Activated naive CD4-positive, alpha-beta T cell treated with anti-CD3 and anti-CD28 coated beads for 36 hours (primary cell): ENCODE measurements at regions of chr7 and their contacts with region 1.

Region 1: DNA sequence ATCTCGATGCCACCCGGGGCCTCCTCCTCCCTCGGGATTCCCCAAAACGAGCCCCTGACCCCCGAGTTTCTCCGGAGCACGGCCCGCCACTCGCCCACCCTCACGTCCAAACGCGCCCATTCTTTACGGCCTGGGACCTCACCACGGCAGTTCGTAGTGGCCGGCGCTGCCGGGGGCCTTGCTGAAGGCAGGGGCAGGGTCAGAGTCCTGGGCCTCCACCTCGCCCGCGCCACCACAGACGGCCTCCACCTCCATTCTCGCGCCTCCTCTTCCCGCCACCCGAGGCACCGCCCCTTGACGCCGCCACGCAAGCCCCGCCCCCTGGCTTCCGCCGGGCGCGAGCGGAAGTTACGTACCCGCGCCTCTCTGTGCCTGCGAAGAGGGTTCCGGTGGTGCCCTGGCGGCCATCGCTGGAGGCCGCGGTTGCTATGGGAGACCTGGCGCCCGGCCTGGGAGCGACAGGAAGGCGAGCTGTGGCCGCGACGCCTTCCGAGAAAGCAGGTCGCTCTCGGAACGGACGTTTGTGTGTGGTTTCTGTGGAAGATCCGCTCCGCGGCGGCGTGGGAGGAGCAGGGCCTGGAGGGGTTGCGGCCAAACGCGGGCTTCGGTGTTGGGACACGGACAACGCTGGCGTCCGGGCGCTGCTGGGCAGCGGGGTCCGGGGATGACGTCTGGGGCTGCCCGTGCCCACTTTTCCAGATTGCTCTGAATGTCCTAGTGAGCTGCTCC is at the start of gene RFC2:
- DNase-seq: peak; percentile 97
- H3K4me3 Mint-ChIP-seq: peak within 1 kb of the TSS; percentile 95
- H3K27ac Mint-ChIP-seq: peak within 1 kb of the TSS; percentile 95
- H3K4me1 Mint-ChIP-seq: peaks cover 20% of the 10 kb centered on the region
- H3K27me3 Mint-ChIP-seq: no peaks in the 10 kb centered on the region
- total RNA-seq, gene RFC2: 91.5 to 96.0 TPM

Region 2: GRCh38 chr7:73522105-73522872 is 732.0 kb before region 1 on chr7 and contains the start of gene BAZ1B:
- CTCF ChIA-PET with region 1: no interaction called
- intact Hi-C with region 1: loop called (anchors 5 kb)
- DNase-seq: peak; percentile 99
- H3K4me3 Mint-ChIP-seq: peak within 1 kb of the TSS; percentile 98
- H3K27ac Mint-ChIP-seq: peak within 1 kb of the TSS; percentile 96
- H3K4me1 Mint-ChIP-seq: peaks cover 55% of the 10 kb centered on the region
- H3K27me3 Mint-ChIP-seq: no peaks in the 10 kb centered on the region
- total RNA-seq, gene BAZ1B: 67.6 to 69.9 TPM

Region 3: DNA sequence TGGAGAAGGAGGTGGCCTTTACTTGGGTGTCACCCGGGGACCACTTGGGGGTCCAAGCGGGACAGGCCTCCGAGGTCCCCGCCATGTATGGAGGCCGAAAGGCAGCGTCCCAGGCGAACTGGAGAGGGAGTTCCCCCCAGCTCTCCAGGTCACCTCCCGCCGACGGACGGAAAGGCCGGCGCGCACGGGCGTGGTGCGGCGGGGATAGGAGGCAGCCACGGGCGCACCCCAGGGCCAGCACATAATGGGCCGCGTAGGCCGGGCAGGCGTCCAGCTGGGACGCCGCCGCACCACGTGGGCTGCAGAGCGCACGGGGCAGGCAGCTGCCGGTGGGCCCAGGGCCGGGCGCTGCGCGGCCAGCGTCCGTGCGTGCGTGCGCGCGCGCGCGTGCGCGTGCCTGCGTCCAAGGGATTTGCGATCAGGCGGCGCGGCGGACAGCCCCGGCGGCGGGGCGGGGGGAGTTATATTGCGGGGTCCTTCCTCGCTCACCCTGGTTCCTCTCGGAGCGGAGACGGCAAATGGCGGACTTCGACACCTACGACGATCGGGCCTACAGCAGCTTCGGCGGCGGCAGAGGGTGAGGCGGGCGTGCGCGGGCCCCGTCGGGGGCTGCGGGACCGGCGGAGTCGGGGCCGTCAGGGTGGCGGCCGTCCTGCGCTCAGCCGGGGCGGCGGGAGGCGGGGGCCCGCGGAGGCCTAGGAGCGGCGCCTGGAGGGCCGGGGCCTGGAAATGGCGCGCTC is 80.3 kb before region 1 on chr7 and contains the start of gene EIF4H:
- CTCF ChIA-PET with region 1: no interaction called
- intact Hi-C with region 1: loop called (anchors 1 kb)
- DNase-seq: peak; percentile 95
- H3K4me3 Mint-ChIP-seq: peak within 1 kb of the TSS; percentile 87
- H3K27ac Mint-ChIP-seq: peak within 1 kb of the TSS; percentile 88
- H3K4me1 Mint-ChIP-seq: peaks cover 39% of the 10 kb centered on the region
- H3K27me3 Mint-ChIP-seq: no peaks in the 10 kb centered on the region
- total RNA-seq, gene EIF4H: 492 to 518 TPM

Region 4: DNA sequence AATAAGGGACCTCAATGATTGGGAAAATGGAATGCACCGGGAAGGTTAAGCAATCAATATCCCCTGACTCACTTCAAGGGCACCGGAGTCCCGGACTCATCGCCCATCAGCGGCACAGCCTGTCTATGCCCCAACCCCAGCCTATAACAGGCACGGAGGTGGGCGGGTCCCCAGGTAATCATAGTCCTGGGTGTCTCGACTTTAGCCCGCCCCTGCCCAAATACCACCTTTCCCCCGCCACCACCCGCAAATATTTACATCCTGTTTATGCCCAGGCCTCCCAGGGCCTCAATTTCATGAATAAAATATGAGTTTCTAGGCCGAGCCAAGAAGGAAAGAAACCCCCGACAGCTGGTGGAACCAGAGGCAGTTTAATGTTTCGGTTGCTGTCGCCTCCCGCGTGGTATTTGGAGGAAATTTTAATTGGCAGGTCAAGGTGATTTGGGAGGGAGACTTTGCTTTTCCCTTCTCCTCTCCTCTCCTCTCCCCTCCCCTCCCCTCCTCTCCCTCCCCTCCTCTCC is 15.5 kb after region 1 on chr7:
- CTCF ChIA-PET with region 1: interaction called, 3 read pairs
- intact Hi-C with region 1: loop called (anchors 1 kb)
- DNase-seq: peak; percentile 74
- H3K4me3 Mint-ChIP-seq: peak overlapping the region; percentile 73
- H3K27ac Mint-ChIP-seq: no peak overlapping the region
- H3K4me1 Mint-ChIP-seq: peaks cover 11% of the 10 kb centered on the region
- H3K27me3 Mint-ChIP-seq: peaks cover 5% of the 10 kb centered on the region

Region 5: DNA sequence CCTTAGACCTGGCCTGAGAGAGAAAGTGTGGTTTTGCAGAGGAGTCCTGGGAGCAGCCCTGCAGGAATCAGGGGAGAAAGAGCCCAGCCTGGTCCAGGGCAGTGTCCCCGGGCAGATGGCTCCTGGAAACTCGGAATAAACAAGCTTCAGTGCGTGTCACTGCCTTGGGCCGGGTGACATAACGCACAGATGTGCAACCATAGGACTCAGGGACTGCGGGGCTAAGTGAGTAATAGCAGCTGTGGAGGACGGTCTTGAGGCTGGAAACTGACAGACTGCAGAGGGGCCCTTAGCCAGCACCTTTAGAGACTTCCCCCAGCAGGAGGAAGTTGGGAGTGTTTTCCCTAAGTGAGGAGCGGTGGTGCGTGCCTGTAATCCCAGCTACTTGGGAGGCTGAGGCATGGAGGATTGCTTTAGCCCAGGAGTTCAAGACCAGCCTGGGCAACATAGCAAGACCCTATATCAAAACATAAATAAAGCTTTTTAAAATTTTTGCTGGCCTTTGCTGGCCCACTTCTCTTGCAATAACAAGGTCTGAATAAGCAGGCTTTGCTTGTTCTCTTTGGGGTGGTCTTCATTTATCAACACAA is 29.7 kb after region 1 on chr7:
- CTCF ChIA-PET with region 1: no interaction called
- intact Hi-C with region 1: no loop called
- DNase-seq: no peak
- H3K4me3 Mint-ChIP-seq: no peak overlapping the region
- H3K27ac Mint-ChIP-seq: no peak overlapping the region
- H3K4me1 Mint-ChIP-seq: peaks cover 11% of the 10 kb centered on the region
- H3K27me3 Mint-ChIP-seq: peaks cover 9% of the 10 kb centered on the region

Region 6: DNA sequence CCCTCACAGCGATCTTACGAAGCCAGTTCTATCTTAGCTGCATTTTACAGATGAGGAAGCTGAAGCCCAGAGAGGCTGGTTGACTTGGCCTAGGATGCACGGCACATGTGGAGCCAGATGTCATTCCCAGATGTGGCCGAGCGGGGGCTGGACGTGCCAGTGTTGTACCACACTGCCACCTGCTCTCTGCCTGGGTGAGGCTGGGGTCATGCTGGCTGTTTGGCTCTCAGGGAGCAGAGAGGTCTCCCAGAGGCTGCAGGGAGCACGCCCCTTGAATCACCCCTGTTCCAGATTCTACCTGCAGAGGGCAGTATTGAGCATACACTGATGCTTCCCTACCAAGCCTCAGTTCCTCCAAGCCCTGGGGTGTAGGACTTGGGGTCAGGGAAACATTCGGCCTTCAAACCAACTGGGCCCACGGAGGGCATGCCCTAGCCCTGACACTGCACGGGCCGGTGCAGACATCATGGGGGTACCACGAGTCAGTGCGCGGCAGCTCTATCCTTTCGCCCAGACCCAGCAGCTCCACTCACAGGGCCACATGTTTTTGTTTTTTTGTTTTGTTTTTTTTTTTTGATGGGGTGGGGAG is 195.6 kb after region 1 on chr7:
- CTCF ChIA-PET with region 1: no interaction called
- intact Hi-C with region 1: loop called (anchors 1 kb)
- DNase-seq: peak; percentile 81
- H3K4me3 Mint-ChIP-seq: no peak overlapping the region
- H3K27ac Mint-ChIP-seq: no peak overlapping the region
- H3K4me1 Mint-ChIP-seq: peaks cover 12% of the 10 kb centered on the region
- H3K27me3 Mint-ChIP-seq: no peaks in the 10 kb centered on the region